Activated CD4-positive, alpha-beta T cell treated with anti-CD3 and anti-CD28 coated beads for 36 hours (primary cell): ENCODE measurements at regions of chr6 and their contacts with region 1.

Region 1: DNA sequence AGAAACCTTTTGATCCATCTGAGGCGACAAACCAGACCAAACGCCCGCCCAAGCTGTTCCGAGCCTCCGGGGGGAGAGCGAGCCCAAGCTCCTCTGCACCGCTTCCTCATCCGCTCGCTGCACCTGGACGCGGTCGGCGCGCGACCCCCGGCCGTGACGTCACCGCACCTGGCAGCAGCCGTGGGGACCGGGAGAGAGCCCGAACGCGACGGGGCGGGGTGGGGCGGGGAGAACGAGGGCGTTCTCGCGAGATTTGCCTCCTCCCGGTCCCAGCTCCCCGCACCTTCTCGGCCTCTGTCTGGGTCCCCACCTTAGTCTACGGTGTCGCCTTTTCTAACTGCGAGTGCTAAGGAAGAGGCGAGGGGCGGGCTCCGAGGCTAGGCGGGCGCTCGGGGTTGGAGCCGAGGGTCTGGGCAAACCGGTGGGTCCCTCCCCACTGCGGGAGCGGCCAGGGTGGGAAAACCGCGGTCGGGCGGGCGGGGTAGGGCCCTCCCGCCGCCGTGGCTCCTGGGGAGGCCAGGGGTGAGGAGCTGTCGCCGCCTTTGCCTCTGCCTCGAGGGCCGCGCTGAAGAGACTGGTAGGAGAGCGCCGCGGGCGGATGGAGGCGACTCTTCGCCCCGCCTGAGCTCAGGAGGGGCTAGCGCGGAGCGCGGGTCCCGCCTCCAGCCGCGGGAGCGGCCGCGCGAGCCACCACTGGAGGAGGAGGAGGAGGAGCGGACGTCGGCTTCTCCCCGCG is at the start of gene CD2AP:
- DNase-seq: peak; percentile 93
- ATAC-seq: peak; percentile 87
- H3K4me3 Mint-ChIP-seq: peak within 1 kb of the TSS; percentile 97
- H3K27ac Mint-ChIP-seq: peak within 1 kb of the TSS; percentile 98
- H3K4me1 Mint-ChIP-seq: peaks cover 30% of the 10 kb centered on the region
- H3K27me3 Mint-ChIP-seq: no peaks in the 10 kb centered on the region
- total RNA-seq, gene CD2AP: 28.4 to 29.3 TPM

Region 2: GRCh38 chr6:46129629-46130511 is 1347.8 kb before region 1 on chr6 and contains the start of gene ENPP4:
- CTCF ChIA-PET with region 1: no interaction called
- POLR2A ChIA-PET with region 1: no interaction called
- intact Hi-C with region 1: loop called in 1 of 2 experiments (anchors 10 kb)
- DNase-seq: peak; percentile 92
- ATAC-seq: peak; percentile 100
- H3K4me3 Mint-ChIP-seq: peak within 1 kb of the TSS; percentile 87
- H3K27ac Mint-ChIP-seq: peak within 1 kb of the TSS; percentile 88
- H3K4me1 Mint-ChIP-seq: peaks cover 32% of the 10 kb centered on the region
- H3K27me3 Mint-ChIP-seq: no peaks in the 10 kb centered on the region
- total RNA-seq, gene ENPP4: 6.0 to 6.6 TPM

Region 3: GRCh38 chr6:47587493-47587892 is 109.8 kb after region 1 on chr6:
- CTCF ChIA-PET with region 1: no interaction called
- POLR2A ChIA-PET with region 1: no interaction called
- intact Hi-C with region 1: no loop called
- DNase-seq: no peak
- ATAC-seq: no peak
- H3K4me3 Mint-ChIP-seq: no peak overlapping the region
- H3K27ac Mint-ChIP-seq: no peak overlapping the region
- H3K4me1 Mint-ChIP-seq: no peaks in the 10 kb centered on the region
- H3K27me3 Mint-ChIP-seq: no peaks in the 10 kb centered on the region

Region 4: DNA sequence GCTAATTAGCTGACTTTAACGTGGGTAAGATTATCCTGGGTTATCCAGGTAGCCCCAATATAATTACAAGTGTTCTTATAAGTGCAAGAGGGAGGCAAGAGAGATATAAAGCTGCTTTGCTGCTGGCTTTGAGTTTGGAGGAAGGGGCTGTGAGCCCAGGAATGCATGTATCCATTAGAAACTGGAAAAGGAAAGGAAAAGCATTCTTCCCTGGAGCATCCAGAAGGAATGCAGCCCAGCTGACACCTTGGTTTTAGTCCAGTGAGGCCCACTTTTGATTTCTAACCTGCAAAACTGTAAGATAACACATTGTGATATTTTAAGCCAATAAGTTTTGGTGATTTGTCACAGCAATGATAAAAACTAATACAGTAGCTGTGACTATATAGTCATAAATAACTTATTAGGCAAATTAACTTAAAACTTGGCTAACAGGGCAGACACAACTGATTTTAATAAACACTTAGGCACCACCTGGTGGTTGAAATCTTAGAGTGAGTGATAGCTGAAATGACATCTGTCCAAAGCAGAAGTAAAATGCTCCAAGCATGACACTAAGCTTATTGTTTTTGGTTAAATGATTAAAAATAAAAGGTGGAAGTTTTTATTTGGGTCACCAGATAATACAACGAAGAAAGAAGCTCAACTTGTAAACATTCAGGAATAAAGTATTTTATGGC is 256.4 kb after region 1 on chr6:
- CTCF ChIA-PET with region 1: no interaction called
- POLR2A ChIA-PET with region 1: no interaction called
- intact Hi-C with region 1: loop called in 1 of 2 experiments (anchors 5 kb)
- DNase-seq: no peak
- ATAC-seq: no peak
- H3K4me3 Mint-ChIP-seq: no peak overlapping the region
- H3K27ac Mint-ChIP-seq: no peak overlapping the region
- H3K4me1 Mint-ChIP-seq: peaks cover 7% of the 10 kb centered on the region
- H3K27me3 Mint-ChIP-seq: peaks cover 13% of the 10 kb centered on the region

Region 5: GRCh38 chr6:49462927-49463611 is 1985.4 kb after region 1 on chr6 and contains the starts of genes CENPQ and MMUT:
- CTCF ChIA-PET with region 1: no interaction called
- POLR2A ChIA-PET with region 1: no interaction called
- intact Hi-C with region 1: loop called in 1 of 2 experiments (anchors 2 kb)
- DNase-seq: peak; percentile 94
- ATAC-seq: peak; percentile 95
- H3K4me3 Mint-ChIP-seq: peak within 1 kb of the TSS; percentile 97
- H3K27ac Mint-ChIP-seq: peak within 1 kb of the TSS; percentile 96
- H3K4me1 Mint-ChIP-seq: peaks cover 34% of the 10 kb centered on the region
- H3K27me3 Mint-ChIP-seq: no peaks in the 10 kb centered on the region
- total RNA-seq, gene CENPQ: 14.1 to 16.6 TPM
- total RNA-seq, gene MMUT: 10.5 to 14.8 TPM